B cell (primary cell): ENCODE measurements at regions of chr2 and their contacts with region 1.

Region 1: GRCh38 chr2:172555522-172556283 is at the start of gene PDK1:
- DNase-seq: peak; percentile 94
- ATAC-seq: peak; percentile 90
- H3K4me3 ChIP-seq: peak within 1 kb of the TSS; percentile 80 to 96 (median 86)
- H3K4me3 Mint-ChIP-seq: peak within 1 kb of the TSS; percentile 98
- H3K27ac ChIP-seq: peak within 1 kb of the TSS; percentile 87 to 92
- H3K27ac Mint-ChIP-seq: peak within 1 kb of the TSS; percentile 97
- H3K4me1 ChIP-seq: peaks cover 20 to 25% of the 10 kb centered on the region in 2 donors
- H3K4me1 Mint-ChIP-seq: peaks cover 32% of the 10 kb centered on the region
- H3K27me3 ChIP-seq: no peaks in the 10 kb centered on the region
- H3K27me3 Mint-ChIP-seq: no peaks in the 10 kb centered on the region
- CTCF ChIP-seq: no peak
- total RNA-seq, gene PDK1: 25.5 and 33.6 TPM in 2 replicates

Region 2: DNA sequence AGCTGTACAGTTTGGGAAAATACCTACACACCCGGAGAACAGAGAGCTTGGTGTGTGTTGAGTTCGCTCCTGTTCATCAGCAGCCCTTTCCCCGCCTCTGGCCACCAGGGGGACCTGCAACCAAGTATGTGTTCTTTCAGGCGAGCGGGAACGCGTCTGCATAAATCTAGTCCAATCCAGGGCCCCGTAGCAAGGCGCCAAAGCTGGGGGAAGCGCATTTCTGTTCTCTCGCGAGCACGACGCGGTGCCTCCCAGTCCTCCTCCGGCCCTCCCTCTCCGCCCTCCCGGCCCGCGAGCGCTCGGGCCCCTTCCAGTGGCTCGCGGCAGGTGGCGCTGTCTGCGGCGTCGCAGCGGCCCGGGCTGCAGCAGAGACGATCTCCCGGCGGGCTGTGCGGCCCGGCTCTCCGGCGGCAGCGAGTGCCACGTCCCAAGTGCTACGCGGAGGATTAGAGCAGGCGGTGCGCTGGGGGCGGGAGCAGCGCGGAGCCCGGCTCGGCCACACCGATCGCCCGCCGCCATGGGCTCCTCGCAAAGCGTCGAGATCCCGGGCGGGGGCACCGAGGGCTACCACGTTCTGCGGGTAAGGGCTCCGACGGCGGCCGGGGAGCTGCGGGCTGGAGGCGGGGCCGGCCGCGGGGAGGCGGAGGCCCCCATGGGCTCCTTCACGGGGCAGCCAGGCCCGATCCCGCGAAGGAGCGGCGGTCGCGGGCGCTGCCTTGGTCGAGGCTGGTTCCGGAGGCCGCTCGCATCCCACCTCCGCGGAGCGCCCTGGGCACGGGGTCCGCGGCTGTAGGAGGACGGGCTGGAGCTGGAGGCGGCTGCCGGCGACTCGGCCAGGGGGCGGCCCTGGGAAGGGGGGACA is 1626.6 kb before region 1 on chr2 and contains the start of gene GORASP2:
- CTCF ChIA-PET with region 1: no interaction called
- POLR2A ChIA-PET with region 1: interaction called, 3 read pairs
- intact Hi-C with region 1: loop called (anchors 1 kb)
- DNase-seq: peak; percentile 99
- ATAC-seq: peak; percentile 91
- H3K4me3 ChIP-seq: peak within 1 kb of the TSS; percentile 73 to 95 (median 89)
- H3K4me3 Mint-ChIP-seq: peak within 1 kb of the TSS; percentile 92
- H3K27ac ChIP-seq: peak within 1 kb of the TSS; percentile 75 to 90
- H3K27ac Mint-ChIP-seq: peak within 1 kb of the TSS; percentile 96
- H3K4me1 ChIP-seq: peaks cover 20 to 22% of the 10 kb centered on the region in 2 donors
- H3K4me1 Mint-ChIP-seq: peaks cover 34% of the 10 kb centered on the region
- H3K27me3 ChIP-seq: no peaks in the 10 kb centered on the region
- H3K27me3 Mint-ChIP-seq: no peaks in the 10 kb centered on the region
- CTCF ChIP-seq: peak; percentile 99
- total RNA-seq, gene GORASP2: 48.8 and 50.5 TPM in 2 replicates

Region 3: GRCh38 chr2:171541202-171541887 is 1014.4 kb before region 1 on chr2:
- CTCF ChIA-PET with region 1: no interaction called
- POLR2A ChIA-PET with region 1: no interaction called
- intact Hi-C with region 1: no loop called
- DNase-seq: no peak
- ATAC-seq: no peak
- H3K4me3 ChIP-seq: no peak overlapping the region
- H3K4me3 Mint-ChIP-seq: no peak overlapping the region
- H3K27ac ChIP-seq: no peak overlapping the region
- H3K27ac Mint-ChIP-seq: no peak overlapping the region
- H3K4me1 ChIP-seq: no peaks in the 10 kb centered on the region
- H3K4me1 Mint-ChIP-seq: no peaks in the 10 kb centered on the region
- H3K27me3 ChIP-seq: peaks cover 0 to 3% (median 1%) of the 10 kb centered on the region in 4 experiments
- H3K27me3 Mint-ChIP-seq: peaks cover 25% of the 10 kb centered on the region
- CTCF ChIP-seq: peak; percentile 14

Region 4: GRCh38 chr2:171893824-171894611 is 661.7 kb before region 1 on chr2 and contains the start of gene SLC25A12:
- CTCF ChIA-PET with region 1: no interaction called
- POLR2A ChIA-PET with region 1: no interaction called
- intact Hi-C with region 1: loop called (anchors 5 kb)
- DNase-seq: peak; percentile 87
- ATAC-seq: peak; percentile 92
- H3K4me3 ChIP-seq: peak within 1 kb of the TSS; percentile 78 to 93 (median 88)
- H3K4me3 Mint-ChIP-seq: peak within 1 kb of the TSS; percentile 99
- H3K27ac ChIP-seq: peak within 1 kb of the TSS; percentile 69 to 88
- H3K27ac Mint-ChIP-seq: peak within 1 kb of the TSS; percentile 91
- H3K4me1 ChIP-seq: peaks cover 14 to 16% of the 10 kb centered on the region in 2 donors
- H3K4me1 Mint-ChIP-seq: peaks cover 25% of the 10 kb centered on the region
- H3K27me3 ChIP-seq: no peaks in the 10 kb centered on the region
- H3K27me3 Mint-ChIP-seq: no peaks in the 10 kb centered on the region
- CTCF ChIP-seq: no peak
- total RNA-seq, gene SLC25A12: 19.6 and 21.0 TPM in 2 replicates

Region 5: GRCh38 chr2:172052000-172052983 is 503.4 kb before region 1 on chr2:
- CTCF ChIA-PET with region 1: no interaction called
- POLR2A ChIA-PET with region 1: no interaction called
- intact Hi-C with region 1: no loop called
- DNase-seq: no peak
- ATAC-seq: no peak
- H3K4me3 ChIP-seq: no peak overlapping the region
- H3K4me3 Mint-ChIP-seq: no peak overlapping the region
- H3K27ac ChIP-seq: no peak overlapping the region
- H3K27ac Mint-ChIP-seq: no peak overlapping the region
- H3K4me1 ChIP-seq: no peaks in the 10 kb centered on the region
- H3K4me1 Mint-ChIP-seq: no peaks in the 10 kb centered on the region
- H3K27me3 ChIP-seq: no peaks in the 10 kb centered on the region
- H3K27me3 Mint-ChIP-seq: no peaks in the 10 kb centered on the region
- CTCF ChIP-seq: no peak

Region 6: GRCh38 chr2:172102391-172103278 is 453.1 kb before region 1 on chr2 and contains the start of gene DLX2:
- CTCF ChIA-PET with region 1: no interaction called
- POLR2A ChIA-PET with region 1: interaction called, 3 read pairs
- intact Hi-C with region 1: loop called (anchors 5 kb)
- DNase-seq: peak; percentile 82
- ATAC-seq: peak; percentile 55
- H3K4me3 ChIP-seq: peak within 1 kb of the TSS; percentile 16 to 51 (median 36)
- H3K4me3 Mint-ChIP-seq: peak within 1 kb of the TSS; percentile 72
- H3K27ac ChIP-seq: no peak within 1 kb of the TSS
- H3K27ac Mint-ChIP-seq: peak within 1 kb of the TSS; percentile 71
- H3K4me1 ChIP-seq: peaks cover 61 to 86% of the 10 kb centered on the region in 2 donors
- H3K4me1 Mint-ChIP-seq: peaks cover 41% of the 10 kb centered on the region
- H3K27me3 ChIP-seq: peaks cover 4 to 100% (median 91%) of the 10 kb centered on the region in 4 experiments
- H3K27me3 Mint-ChIP-seq: peaks cover 49% of the 10 kb centered on the region
- CTCF ChIP-seq: no peak
- total RNA-seq, gene DLX2: 0.52 and 0.61 TPM in 2 replicates

Region 7: DNA sequence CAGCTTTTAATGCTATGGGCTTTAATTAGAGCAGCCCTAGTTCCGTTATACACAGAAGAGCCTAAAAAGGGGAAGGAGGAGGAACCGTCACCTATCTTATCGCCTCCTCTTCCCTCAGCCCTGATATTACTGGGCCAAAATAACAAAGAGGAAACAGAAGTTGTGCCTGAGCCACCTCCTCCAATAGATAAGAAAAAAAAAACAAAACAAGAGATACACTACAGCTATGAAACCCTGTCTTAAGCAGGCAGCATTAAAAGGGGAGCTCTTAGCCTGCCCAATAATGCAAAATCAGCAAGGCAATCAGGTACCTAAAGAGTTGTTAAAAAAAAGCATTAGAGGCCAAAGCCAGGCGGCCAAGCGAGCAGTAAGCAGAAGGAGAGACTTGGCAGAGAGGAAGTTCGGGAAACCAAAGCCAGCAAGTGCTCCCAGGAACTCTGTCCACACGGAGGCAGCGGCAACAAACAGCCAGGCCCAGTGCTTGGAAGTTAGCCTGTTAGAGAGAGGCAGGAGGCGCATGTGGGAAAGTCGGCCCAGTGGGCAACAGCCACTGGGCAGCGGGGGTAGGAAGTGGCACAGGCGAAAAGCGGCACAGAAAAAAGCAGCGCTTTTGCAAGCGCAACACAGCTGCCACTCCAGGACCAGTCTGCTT is 41.6 kb before region 1 on chr2:
- CTCF ChIA-PET with region 1: no interaction called
- POLR2A ChIA-PET with region 1: interaction called, 10 read pairs
- intact Hi-C with region 1: no loop called
- DNase-seq: peak; percentile 56
- ATAC-seq: peak; percentile 73
- H3K4me3 ChIP-seq: no peak overlapping the region
- H3K4me3 Mint-ChIP-seq: peak overlapping the region; percentile 65
- H3K27ac ChIP-seq: peak overlapping the region in 1 of 2 donors; percentile 62
- H3K27ac Mint-ChIP-seq: peak overlapping the region; percentile 79
- H3K4me1 ChIP-seq: peaks cover 55 to 57% of the 10 kb centered on the region in 2 donors
- H3K4me1 Mint-ChIP-seq: peaks cover 50% of the 10 kb centered on the region
- H3K27me3 ChIP-seq: no peaks in the 10 kb centered on the region
- H3K27me3 Mint-ChIP-seq: no peaks in the 10 kb centered on the region
- CTCF ChIP-seq: no peak

Region 8: GRCh38 chr2:174487108-174487819 is 1931.6 kb after region 1 on chr2:
- CTCF ChIA-PET with region 1: no interaction called
- POLR2A ChIA-PET with region 1: no interaction called
- intact Hi-C with region 1: loop called (anchors 10 kb)
- DNase-seq: peak; percentile 95
- ATAC-seq: peak; percentile 93
- H3K4me3 ChIP-seq: peak overlapping the region; percentile 81 to 90 (median 87)
- H3K4me3 Mint-ChIP-seq: peak overlapping the region; percentile 98
- H3K27ac ChIP-seq: peak overlapping the region; percentile 74 to 75
- H3K27ac Mint-ChIP-seq: peak overlapping the region; percentile 88
- H3K4me1 ChIP-seq: peaks cover 17 to 27% of the 10 kb centered on the region in 2 donors
- H3K4me1 Mint-ChIP-seq: peaks cover 44% of the 10 kb centered on the region
- H3K27me3 ChIP-seq: no peaks in the 10 kb centered on the region
- H3K27me3 Mint-ChIP-seq: no peaks in the 10 kb centered on the region
- CTCF ChIP-seq: no peak